Activated T-helper 1 cell treated with anti-CD3 and anti-CD28 coated beads, Interleukin-12 subunit alpha, Interleukin-12 subunit beta, Interleukin-2, Interleukin-4 antibody, amounts not matched to agents 30 ng/mL and 10 ng/mL and 1 ng/mL, durations not matched to agents 14 hours and 24 hours and 36 hours (primary cell): ENCODE measurements at regions of chr5 and their contacts with region 1.

Region 1: GRCh38 chr5:6029811-6030271 is 348.5 kb downstream of the MED10 start:
- DNase-seq: no peak
- H3K4me3 Mint-ChIP-seq: no peak overlapping the region
- H3K27ac Mint-ChIP-seq: no peak overlapping the region
- H3K4me1 Mint-ChIP-seq: no peaks in the 10 kb centered on the region
- H3K27me3 Mint-ChIP-seq: no peaks in the 10 kb centered on the region

Region 2: GRCh38 chr5:5979377-5980079 is 50.3 kb before region 1 on chr5:
- intact Hi-C with region 1: loop called (anchors 2 kb)
- DNase-seq: no peak
- H3K4me3 Mint-ChIP-seq: no peak overlapping the region
- H3K27ac Mint-ChIP-seq: no peak overlapping the region
- H3K4me1 Mint-ChIP-seq: no peaks in the 10 kb centered on the region
- H3K27me3 Mint-ChIP-seq: no peaks in the 10 kb centered on the region

Region 3: DNA sequence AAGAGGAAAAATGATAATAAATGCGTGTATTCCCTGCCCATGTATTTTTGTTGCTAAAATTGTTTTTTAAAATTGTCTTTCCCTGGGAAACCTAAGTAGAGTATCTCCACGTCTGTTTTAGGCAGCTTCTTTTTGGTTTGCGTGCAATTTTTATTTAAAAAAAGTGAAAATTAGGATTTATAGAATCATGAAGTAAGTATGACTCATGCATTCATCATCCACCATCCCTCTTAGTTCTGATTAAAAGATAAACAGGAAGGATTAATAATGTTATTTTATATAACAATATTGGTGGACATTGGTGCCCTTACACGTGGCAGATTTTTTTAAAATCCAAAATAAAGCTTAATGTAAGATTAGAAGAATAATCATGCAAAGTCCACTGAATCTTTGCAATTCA is 10.2 kb before region 1 on chr5:
- intact Hi-C with region 1: no loop called
- DNase-seq: no peak
- H3K4me3 Mint-ChIP-seq: no peak overlapping the region
- H3K27ac Mint-ChIP-seq: no peak overlapping the region
- H3K4me1 Mint-ChIP-seq: no peaks in the 10 kb centered on the region
- H3K27me3 Mint-ChIP-seq: no peaks in the 10 kb centered on the region

Region 4: DNA sequence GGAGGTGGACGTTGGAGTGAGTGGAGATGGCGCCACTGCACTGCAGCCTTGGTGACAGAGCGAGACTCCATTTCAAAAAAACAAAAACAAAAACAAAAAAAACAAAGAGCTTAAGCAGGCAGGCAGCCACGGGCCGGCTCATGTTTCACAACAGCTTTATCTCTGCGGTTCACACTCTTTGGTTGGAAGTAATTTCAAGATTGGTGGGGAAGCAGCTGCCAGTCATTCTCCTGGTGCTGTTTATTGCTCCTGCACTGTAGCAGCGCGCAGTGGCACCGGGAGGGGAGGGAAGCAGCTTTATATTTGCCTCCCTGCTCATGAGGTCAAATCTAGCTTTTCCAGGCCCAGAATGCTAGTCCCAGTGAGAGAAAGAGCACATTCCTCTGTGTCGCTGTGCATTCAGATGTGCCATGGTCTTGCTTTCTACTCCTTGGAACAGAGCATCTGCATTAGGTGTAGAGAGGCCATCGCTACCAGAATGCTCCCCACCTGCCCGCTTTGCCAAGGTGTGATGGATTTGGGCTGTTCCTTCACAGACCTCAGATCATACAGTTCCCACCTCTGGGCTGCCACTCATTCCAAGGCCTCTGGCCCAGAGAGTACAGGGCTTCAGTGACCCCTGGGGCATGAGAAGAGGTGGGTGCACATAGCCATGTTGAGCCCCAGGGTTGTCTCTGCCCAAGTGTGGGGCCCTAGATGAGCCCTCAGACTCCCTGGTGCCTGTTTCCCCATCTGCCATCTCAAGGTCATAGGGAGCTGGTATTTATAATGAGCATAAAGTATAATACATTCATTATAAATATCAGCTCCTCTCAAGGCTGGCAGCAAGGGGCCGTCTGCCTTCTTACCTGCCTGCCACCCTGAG is 78.1 kb after region 1 on chr5:
- intact Hi-C with region 1: no loop called
- DNase-seq: no peak
- H3K4me3 Mint-ChIP-seq: no peak overlapping the region
- H3K27ac Mint-ChIP-seq: no peak overlapping the region
- H3K4me1 Mint-ChIP-seq: no peaks in the 10 kb centered on the region
- H3K27me3 Mint-ChIP-seq: no peaks in the 10 kb centered on the region